Activated T-helper 1 cell treated with anti-CD3 and anti-CD28 coated beads, Interleukin-12 subunit alpha, Interleukin-12 subunit beta, Interleukin-2, Interleukin-4 antibody, amounts not matched to agents 30 ng/mL and 10 ng/mL and 1 ng/mL, durations not matched to agents 14 hours and 24 hours and 36 hours (primary cell): ENCODE measurements at regions of chr3 and their contacts with region 1.

Region 1: DNA sequence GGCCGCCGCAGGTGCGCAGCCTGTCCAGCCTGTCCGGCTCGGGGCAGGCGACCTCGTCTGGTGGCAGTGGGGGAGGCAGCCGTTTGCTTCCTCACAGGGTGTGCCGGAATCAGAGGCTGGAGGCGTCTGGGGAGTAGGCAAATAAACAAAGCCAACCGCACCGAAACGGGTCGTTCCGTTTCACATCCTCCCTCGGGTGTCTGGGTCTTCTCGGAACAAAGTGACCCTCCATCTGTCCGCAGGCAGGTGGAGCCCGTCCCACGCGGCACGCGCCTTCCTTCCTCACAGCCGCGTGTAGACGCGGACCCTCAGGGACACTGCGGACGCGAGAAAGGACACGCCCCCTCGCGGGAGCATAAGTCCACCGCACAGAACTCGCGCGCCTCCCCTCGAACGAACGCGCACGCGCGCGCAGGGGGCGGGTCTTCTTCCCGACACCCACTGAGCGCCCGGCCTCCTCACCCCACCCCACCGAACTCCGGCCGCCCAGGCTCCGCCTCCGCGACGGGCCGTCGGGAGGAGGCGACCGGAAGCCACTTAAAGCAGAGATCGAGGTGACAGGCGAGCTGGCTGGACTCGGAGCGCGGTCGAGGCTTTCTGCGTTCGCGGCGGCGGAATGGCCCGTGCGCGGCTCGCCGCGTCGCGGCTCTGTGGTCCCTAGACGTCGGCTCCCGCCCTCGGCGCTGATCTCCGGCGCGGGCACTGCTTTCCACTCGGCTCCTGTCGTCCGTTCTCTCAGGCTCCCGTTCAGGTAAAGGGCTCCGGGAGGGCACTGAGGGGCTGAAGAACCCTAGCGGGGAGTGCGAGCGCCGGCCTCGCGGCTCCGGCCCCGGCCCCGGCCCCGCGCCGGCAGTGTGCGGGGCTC is at the start of gene TIPARP:
- DNase-seq: peak; percentile 100
- H3K4me3 Mint-ChIP-seq: peak within 1 kb of the TSS; percentile 95
- H3K27ac Mint-ChIP-seq: peak within 1 kb of the TSS; percentile 98
- H3K4me1 Mint-ChIP-seq: peaks cover 49% of the 10 kb centered on the region
- H3K27me3 Mint-ChIP-seq: no peaks in the 10 kb centered on the region
- total RNA-seq, gene TIPARP: 20.8 and 21.9 TPM in 2 replicates

Region 2: DNA sequence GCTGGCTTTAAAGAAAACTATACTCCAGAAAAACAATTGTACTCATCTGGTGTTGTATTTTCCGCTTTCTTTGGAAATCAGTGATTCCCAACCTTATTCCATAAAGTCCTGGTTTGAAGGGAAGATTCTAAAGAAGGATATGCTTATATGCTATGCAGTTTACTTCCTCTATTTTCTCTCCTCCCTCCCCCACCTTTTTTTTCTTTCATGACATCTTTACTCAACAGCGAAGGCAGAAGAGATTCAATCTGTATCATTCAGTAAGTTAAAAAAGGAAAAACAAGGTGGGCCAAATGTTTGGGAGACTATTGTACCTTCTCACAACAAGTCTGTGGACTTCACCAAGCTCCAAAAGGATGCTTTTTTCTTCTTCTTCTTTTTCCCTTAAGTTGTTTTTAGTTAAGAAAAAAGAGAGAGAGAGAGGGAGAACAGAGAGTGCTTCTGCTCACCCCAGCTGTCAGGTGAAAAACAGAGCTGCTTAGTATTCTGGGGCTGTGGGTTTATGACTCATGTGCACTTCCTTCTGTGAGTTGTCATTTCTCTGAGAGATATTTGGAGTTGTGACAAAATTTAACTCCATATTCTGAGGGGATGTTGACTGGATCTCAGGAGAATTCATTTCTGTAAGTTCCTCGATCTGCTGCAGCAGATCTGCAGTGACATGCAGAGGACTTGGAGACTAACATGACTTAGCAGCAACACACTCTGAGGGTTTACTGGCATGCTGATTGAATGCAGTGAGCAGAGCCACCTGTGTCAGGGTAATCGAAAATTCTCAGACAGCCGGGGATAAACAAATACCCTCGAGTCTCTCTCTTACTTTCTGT is 190.1 kb before region 1 on chr3:
- intact Hi-C with region 1: loop called (anchors 1 kb)
- DNase-seq: peak; percentile 56
- H3K4me3 Mint-ChIP-seq: peak overlapping the region; percentile 73
- H3K27ac Mint-ChIP-seq: peak overlapping the region; percentile 86
- H3K4me1 Mint-ChIP-seq: peaks cover 42% of the 10 kb centered on the region
- H3K27me3 Mint-ChIP-seq: peaks cover 6% of the 10 kb centered on the region

Region 3: DNA sequence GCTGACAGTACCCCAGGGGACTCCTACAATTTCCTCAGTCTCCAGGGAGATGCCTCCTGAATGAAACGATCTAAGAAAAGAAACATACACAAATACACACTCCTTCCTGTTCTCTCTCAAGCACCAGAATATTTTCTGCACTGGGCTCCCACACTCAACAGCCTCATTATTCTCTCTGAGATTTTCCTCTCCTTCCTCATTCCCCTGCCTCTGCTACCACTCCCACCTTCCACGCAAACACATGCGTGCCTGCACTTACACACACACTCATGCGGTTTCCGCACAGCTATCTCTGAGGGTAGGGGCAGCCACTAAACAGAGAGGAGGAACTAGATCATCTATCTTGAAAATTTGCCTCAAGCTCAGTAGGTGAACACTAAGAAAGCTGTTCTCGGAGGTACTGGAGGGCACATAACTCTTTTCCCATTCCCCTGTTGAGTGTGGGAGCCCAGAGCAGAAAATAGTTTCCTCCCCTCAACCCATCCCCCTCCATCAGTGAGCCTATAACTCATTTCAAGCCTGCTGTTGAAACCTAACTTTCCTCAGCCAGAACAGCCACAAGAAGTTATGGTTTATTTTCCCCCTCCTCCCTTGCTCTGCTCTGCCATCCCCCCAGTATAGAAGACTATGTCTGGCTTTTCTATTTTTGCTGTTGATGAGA is 30.4 kb before region 1 on chr3:
- intact Hi-C with region 1: loop called (anchors 1 kb)
- DNase-seq: peak; percentile 53
- H3K4me3 Mint-ChIP-seq: peak overlapping the region; percentile 72
- H3K27ac Mint-ChIP-seq: peak overlapping the region; percentile 88
- H3K4me1 Mint-ChIP-seq: peaks cover 31% of the 10 kb centered on the region
- H3K27me3 Mint-ChIP-seq: no peaks in the 10 kb centered on the region

Region 4: DNA sequence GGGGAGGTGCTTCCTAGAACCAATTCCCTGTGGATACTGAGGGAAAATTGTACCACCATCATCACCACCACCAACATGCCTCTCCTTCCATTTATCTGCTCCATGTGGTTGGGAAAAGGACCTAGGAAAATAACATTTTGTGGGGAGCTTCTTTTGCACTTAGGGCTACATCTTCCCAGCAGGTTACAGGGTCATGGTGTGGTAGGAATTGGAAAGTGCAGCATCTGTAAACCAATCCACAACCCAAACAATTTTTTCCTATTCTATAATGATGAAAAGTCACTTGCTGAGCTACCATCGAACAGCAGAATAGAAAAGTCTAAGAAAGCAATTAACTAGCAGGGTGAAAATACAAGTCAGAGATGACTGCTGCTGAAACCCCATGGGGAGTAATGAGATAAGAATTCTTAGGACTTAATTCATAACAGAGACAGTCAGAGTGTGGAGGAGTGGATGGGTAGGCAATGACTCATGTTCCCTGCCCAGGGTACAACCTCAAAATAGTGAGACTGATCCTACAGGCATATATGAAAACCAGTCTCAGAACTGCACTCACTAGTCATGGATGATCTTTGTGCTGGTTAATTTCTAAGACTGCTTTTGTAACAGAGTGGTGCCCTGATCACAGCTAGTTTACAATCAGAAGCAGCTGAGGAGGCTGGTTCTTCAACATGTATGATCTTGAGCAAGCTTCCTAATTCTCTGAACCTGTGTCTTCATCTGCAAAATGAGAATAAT is 113.8 kb after region 1 on chr3:
- intact Hi-C with region 1: loop called (anchors 1 kb)
- DNase-seq: no peak
- H3K4me3 Mint-ChIP-seq: no peak overlapping the region
- H3K27ac Mint-ChIP-seq: peak overlapping the region; percentile 10
- H3K4me1 Mint-ChIP-seq: peaks cover 48% of the 10 kb centered on the region
- H3K27me3 Mint-ChIP-seq: no peaks in the 10 kb centered on the region

Region 5: GRCh38 chr3:157088601-157089454 is 414.6 kb after region 1 on chr3:
- intact Hi-C with region 1: loop called (anchors 1 kb)
- DNase-seq: peak; percentile 93
- H3K4me3 Mint-ChIP-seq: peak overlapping the region; percentile 70
- H3K27ac Mint-ChIP-seq: peak overlapping the region; percentile 93
- H3K4me1 Mint-ChIP-seq: peaks cover 76% of the 10 kb centered on the region
- H3K27me3 Mint-ChIP-seq: no peaks in the 10 kb centered on the region

Region 6: GRCh38 chr3:157174649-157175498 is 500.6 kb after region 1 on chr3:
- intact Hi-C with region 1: loop called (anchors 1 kb)
- DNase-seq: peak; percentile 98
- H3K4me3 Mint-ChIP-seq: peak overlapping the region; percentile 94
- H3K27ac Mint-ChIP-seq: peak overlapping the region; percentile 96
- H3K4me1 Mint-ChIP-seq: peaks cover 47% of the 10 kb centered on the region
- H3K27me3 Mint-ChIP-seq: peaks cover 2% of the 10 kb centered on the region